ENCODE measurements at regions of chr3 and their contacts with region 1.

Region 1: GRCh38 chr3:26058901-26059321 is 269.0 kb downstream of the OXSM start:
- DNase-seq: no peak
- H3K4me3 ChIP-seq: no peak overlapping the region
- H3K27ac ChIP-seq: no peak overlapping the region
- H3K4me1 ChIP-seq: no peaks in the 10 kb centered on the region
- H3K27me3 ChIP-seq: no peaks in the 10 kb centered on the region
- CTCF ChIP-seq: no peak

Region 2: GRCh38 chr3:25037049-25037547 is 1021.8 kb before region 1 on chr3:
- CTCF ChIA-PET with region 1: no interaction called
- POLR2A ChIA-PET with region 1: interaction called, 10 read pairs
- intact Hi-C with region 1: no loop called
- DNase-seq: no peak
- H3K4me3 ChIP-seq: no peak overlapping the region
- H3K27ac ChIP-seq: no peak overlapping the region
- H3K4me1 ChIP-seq: no peaks in the 10 kb centered on the region
- H3K27me3 ChIP-seq: no peaks in the 10 kb centered on the region
- CTCF ChIP-seq: no peak

Region 3: DNA sequence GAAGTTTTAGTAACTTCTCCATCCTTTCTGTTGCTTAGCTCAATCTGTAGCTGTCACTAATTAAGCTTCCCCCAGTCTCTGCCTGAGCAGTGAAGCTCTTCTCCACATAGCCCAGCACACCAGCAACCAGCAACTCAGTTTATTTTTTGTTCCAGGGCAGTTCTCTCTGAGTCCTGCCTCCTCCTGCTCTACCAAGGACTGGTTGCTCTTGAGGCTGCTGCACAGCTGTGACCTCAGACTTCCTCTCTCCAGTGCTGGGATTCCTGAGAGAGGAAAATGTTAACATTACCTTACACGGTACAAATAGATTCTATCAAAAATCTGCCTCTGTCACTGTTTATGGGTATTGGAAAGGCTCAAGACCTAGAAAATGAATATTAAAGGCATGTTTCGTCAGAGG is 25.7 kb after region 1 on chr3:
- CTCF ChIA-PET with region 1: no interaction called
- POLR2A ChIA-PET with region 1: no interaction called
- intact Hi-C with region 1: no loop called
- DNase-seq: no peak
- H3K4me3 ChIP-seq: no peak overlapping the region
- H3K27ac ChIP-seq: no peak overlapping the region
- H3K4me1 ChIP-seq: no peaks in the 10 kb centered on the region
- H3K27me3 ChIP-seq: no peaks in the 10 kb centered on the region
- CTCF ChIP-seq: no peak

Region 4: DNA sequence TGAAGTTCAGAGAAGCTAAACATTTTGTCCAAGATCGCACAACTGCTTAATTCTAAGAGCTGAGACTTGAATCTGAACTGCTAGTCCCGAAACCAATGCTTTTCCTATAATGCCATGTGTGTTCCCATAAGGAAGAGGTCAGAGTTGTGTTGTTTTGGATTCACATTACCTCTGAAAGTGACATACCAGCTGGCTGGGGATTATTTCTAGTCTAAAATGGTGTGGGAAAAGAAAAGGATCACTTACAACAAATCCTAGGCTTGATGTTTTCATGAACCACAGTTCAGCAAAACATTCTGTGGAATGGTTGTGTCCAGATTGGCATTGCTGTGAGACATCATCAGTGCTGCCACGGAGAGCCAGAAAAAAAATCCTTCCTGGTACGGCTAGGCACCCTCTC is 528.7 kb after region 1 on chr3:
- CTCF ChIA-PET with region 1: no interaction called
- POLR2A ChIA-PET with region 1: interaction called, 18 read pairs
- intact Hi-C with region 1: no loop called
- DNase-seq: no peak
- H3K4me3 ChIP-seq: no peak overlapping the region
- H3K27ac ChIP-seq: no peak overlapping the region
- H3K4me1 ChIP-seq: no peaks in the 10 kb centered on the region
- H3K27me3 ChIP-seq: no peaks in the 10 kb centered on the region
- CTCF ChIP-seq: no peak

Measured in PC-9 (cell line).